Endothelial cell of umbilical vein (primary cell): ENCODE measurements at regions of chr19 and their contacts with region 1.

Region 1: DNA sequence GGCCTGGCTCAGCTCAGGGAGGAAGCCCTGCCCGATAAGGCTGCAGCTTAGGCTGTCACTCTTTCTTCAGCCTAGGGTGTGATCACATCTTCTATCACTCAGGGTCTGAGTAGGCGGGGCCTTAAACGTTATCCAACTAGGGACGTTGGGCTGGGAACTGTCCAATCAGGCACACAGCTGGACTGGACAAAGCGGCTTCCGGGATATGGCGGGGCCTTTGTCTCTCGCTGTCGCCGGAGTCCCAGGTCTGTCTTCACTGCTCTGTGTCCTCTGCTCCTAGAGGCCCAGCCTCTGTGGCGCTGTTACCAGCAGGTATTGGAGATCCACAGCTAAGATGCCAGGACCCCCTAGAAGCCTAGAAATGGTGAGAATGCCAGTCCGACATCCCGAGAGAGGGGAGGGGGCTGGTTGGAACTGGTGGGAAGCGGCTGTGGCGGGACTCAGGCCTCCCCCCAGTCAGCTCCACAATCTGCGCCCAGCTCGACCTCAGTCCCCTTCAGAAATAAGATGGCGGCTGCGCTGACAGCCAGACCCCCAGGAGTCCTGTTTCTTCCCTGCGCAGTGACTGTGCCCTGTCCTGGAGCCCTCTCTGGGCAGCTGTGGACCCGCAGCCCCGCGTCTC is at the start of gene ZNF254:
- DNase-seq: peak; percentile 97
- H3K4me3 ChIP-seq: peak within 1 kb of the TSS; percentile 92 to 96 (median 93)
- H3K27ac ChIP-seq: peak within 1 kb of the TSS; percentile 96
- H3K4me1 ChIP-seq: peaks cover 4% of the 10 kb centered on the region
- H3K27me3 ChIP-seq: no peaks in the 10 kb centered on the region
- CTCF ChIP-seq: no peak
- POLR2A ChIP-seq: peak; percentile 91
- total RNA-seq, gene ZNF254: 16.0 TPM in 2 replicates

Region 2: GRCh38 chr19:23395041-23395721 is 691.9 kb before region 1 on chr19 and contains the start of gene ZNF91:
- CTCF ChIA-PET with region 1: no interaction called
- POLR2A ChIA-PET with region 1: no interaction called
- dilution Hi-C with region 1: no loop called
- intact Hi-C with region 1: loop called (anchors 10 kb)
- DNase-seq: peak; percentile 95
- H3K4me3 ChIP-seq: peak within 1 kb of the TSS; percentile 60 to 97 (median 97)
- H3K27ac ChIP-seq: peak within 1 kb of the TSS; percentile 99
- H3K4me1 ChIP-seq: no peaks in the 10 kb centered on the region
- H3K27me3 ChIP-seq: no peaks in the 10 kb centered on the region
- CTCF ChIP-seq: no peak
- POLR2A ChIP-seq: peak; percentile 83
- total RNA-seq, gene ZNF91: 12.4 and 17.0 TPM in 2 replicates

Region 3: DNA sequence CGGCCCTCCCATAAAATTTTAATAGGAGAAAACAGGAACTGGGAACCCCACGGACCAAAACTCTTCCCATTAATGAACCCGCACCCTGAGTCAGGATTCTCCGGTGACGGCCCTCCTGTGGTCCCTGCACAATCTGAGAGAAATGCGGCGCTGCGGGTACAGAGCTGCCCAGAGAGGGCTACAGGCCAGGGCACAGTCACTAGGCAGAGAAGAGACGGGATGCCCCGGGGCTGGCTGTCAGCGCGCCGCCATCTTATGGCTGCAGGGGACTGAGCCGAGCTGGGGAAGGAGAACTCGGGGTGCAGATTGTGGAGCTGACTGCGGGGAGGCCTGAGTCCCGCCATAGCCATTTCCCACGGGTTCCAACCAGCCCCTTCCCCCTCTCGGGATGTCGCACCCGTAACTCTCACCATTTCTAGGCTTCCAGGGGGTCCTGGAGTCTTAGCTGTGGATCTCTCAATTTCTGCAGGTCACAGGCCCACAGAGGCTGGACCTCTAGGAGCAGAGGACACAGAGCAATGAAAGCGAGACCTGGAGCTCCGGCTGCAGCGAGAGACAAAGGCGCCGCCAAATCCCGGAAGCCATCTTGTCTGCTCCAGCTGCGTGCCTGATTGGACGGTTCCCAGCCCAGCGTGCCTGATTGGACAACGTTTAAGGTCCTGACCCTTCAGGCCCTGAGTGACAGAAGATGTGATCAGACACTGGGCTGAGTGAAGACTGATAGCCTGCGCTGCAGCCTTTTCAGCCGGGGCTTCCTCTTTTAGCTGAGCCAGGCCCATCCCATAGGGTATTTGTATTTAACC is 400.3 kb before region 1 on chr19 and contains the start of gene ZNF675:
- CTCF ChIA-PET with region 1: no interaction called
- POLR2A ChIA-PET with region 1: no interaction called
- dilution Hi-C with region 1: no loop called
- intact Hi-C with region 1: loop called (anchors 5 kb)
- DNase-seq: peak; percentile 90
- H3K4me3 ChIP-seq: peak within 1 kb of the TSS; percentile 61 to 90 (median 86)
- H3K27ac ChIP-seq: peak within 1 kb of the TSS; percentile 81
- H3K4me1 ChIP-seq: peaks cover 5% of the 10 kb centered on the region
- H3K27me3 ChIP-seq: no peaks in the 10 kb centered on the region
- CTCF ChIP-seq: no peak
- POLR2A ChIP-seq: peak; percentile 61
- total RNA-seq, gene ZNF675: 7.6 and 9.3 TPM in 2 replicates

Region 4: DNA sequence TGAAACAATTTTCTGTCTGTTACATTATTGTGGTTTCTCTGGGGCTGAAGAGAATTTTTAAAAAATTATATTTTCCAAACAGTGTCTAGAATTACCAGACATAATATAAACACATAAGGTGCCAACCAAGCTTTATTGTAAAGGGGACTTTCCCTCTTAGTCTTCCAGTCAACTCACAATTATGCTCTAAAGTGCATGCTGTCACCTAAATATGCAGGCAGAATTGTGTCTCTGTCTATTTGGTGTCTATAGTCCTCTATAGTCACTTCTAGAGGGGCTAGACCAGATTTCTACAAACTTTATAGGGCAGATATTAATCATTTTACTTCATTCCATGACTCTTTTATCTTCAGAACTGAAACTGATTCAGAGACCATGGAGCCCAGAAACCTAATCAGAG is 12.7 kb after region 1 on chr19:
- CTCF ChIA-PET with region 1: interaction called, 3 read pairs
- POLR2A ChIA-PET with region 1: no interaction called
- dilution Hi-C with region 1: no loop called
- intact Hi-C with region 1: loop called (anchors 1 kb)
- DNase-seq: no peak
- H3K4me3 ChIP-seq: no peak overlapping the region
- H3K27ac ChIP-seq: no peak overlapping the region
- H3K4me1 ChIP-seq: no peaks in the 10 kb centered on the region
- H3K27me3 ChIP-seq: no peaks in the 10 kb centered on the region
- CTCF ChIP-seq: no peak
- POLR2A ChIP-seq: no peak